ENCODE measurements at regions of chr16 and their contacts with region 1.

Region 1: GRCh38 chr16:19086322-19087199 is 19.1 kb downstream of the COQ7 start:
- DNase-seq: peak; percentile 82 to 87 (median 87)
- ATAC-seq: peak; percentile 99 to 100 (median 99)
- H3K4me3 ChIP-seq: peak overlapping the region; percentile 4 to 38 (median 35)
- H3K27ac ChIP-seq: no peak overlapping the region
- H3K4me1 ChIP-seq: peaks cover 0 to 7% (median 0%) of the 10 kb centered on the region in 4 donors
- H3K27me3 ChIP-seq: no peaks in the 10 kb centered on the region
- CTCF ChIP-seq: peak; percentile 98 to 100 (median 98)
- POLR2A ChIP-seq: no peak

Region 2: DNA sequence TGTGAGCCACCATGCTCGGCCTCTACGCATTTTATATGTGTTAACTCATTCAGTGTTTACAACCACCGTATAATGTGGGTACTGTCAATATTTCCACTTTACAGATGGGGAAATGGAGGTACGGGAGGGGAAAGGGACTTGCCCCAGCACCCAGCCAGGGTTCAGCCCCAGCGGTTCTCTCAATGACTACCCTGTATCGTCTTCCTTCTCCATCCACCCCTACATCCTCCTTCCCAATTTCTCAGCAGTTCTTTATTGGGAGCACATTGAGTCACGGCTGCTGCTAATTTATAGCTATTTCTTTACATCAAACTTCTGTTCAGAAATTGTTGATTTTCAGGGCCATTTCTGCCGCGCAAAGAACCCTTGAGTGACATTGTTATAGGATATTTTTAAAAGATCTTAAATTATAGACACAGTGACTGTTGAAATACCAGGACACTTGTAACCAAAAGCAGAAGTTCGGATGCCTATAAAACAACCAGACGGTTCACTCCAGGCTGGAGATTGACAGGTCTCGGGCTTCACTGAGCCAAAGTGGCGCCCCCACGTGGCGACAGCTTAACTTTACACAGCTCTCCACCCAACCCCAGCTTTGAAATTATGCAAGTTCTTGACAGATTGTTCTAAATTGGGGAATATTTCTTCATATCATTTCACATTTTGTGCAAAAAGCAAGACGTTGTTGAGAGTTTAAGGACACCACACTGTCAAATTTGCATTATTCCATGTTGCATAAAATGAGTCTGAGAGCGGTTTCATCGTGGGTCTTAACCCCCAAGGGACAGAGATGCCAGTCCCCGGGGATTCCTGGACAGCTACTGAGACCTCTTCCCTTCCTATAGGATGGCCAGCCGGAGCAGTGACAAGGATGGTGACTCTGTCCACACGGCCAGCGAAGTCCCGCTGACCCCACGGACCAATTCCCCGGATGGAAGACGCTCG is 93.3 kb after region 1 on chr16:
- intact Hi-C with region 1: loop called in 1 of 2 experiments (anchors 10 kb)
- DNase-seq: no peak
- ATAC-seq: no peak
- H3K4me3 ChIP-seq: no peak overlapping the region
- H3K27ac ChIP-seq: no peak overlapping the region
- H3K4me1 ChIP-seq: peaks cover 0 to 12% (median 0%) of the 10 kb centered on the region in 4 donors
- H3K27me3 ChIP-seq: no peaks in the 10 kb centered on the region
- CTCF ChIP-seq: peak; percentile 43 to 62 (median 52)
- POLR2A ChIP-seq: no peak

Region 3: DNA sequence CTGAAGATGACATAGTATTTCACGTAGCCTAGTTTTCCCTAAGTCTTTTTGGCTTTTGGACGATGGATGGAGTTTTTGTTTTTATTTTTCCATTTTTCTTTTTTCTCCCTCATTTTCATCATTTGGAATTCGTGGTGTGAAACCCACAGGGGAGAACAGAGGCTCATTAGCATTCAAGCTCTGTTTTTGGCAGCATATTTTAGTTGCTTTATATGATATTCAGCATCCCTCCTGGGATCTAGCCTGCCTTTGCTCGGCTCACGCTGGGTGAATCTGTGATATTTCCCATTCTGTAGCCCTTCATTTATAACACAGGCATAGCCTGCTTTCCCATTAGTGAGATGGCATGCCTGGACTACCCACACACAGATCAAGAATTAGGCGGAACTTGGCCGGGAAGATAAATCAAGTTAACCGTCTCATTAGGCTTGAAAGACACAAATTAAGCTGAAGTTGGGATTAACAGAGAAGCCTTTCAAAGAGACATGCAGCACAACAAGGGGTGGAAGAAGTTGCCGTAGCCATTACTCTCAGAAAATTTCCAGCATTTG is 178.9 kb after region 1 on chr16:
- intact Hi-C with region 1: no loop called
- DNase-seq: no peak
- ATAC-seq: no peak
- H3K4me3 ChIP-seq: no peak overlapping the region
- H3K27ac ChIP-seq: no peak overlapping the region
- H3K4me1 ChIP-seq: no peaks in the 10 kb centered on the region
- H3K27me3 ChIP-seq: no peaks in the 10 kb centered on the region
- CTCF ChIP-seq: no peak
- POLR2A ChIP-seq: no peak

Region 4: DNA sequence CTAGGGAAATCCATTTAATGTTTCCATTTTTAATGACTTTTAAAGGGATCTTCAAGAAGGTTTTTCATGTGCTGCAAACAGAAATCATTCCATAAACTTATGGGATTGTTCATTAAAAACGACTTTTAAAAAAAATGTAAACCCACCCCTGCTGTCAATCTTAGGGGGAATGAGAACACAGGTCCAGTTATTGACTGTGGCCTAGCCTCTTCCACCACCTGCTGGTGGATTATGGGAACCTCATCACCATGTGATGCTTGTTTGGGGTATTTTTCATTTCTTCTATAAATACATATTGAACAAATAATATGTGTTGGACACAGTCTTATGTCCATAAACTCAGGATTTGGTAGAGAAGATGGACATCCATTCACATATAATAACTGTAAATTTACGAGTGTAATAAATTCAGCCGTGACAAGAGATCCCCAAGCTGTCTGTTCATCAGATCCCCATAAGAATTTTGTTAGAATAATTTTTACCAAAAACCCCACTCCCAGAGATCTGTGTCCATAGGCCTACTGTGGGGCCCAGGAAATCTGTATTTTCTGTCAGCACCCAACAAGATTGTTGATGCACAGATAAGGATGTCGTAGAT is 289.1 kb after region 1 on chr16:
- intact Hi-C with region 1: loop called (anchors 5 kb)
- DNase-seq: peak in 1 of 3 donors; percentile 50
- ATAC-seq: peak; percentile 75 to 83 (median 80)
- H3K4me3 ChIP-seq: no peak overlapping the region
- H3K27ac ChIP-seq: no peak overlapping the region
- H3K4me1 ChIP-seq: peaks cover 0 to 13% (median 0%) of the 10 kb centered on the region in 4 donors
- H3K27me3 ChIP-seq: no peaks in the 10 kb centered on the region
- CTCF ChIP-seq: peak; percentile 87 to 94 (median 92)
- POLR2A ChIP-seq: no peak

Region 5: GRCh38 chr16:19382887-19383816 is 296.6 kb after region 1 on chr16:
- intact Hi-C with region 1: loop called (anchors 5 kb)
- DNase-seq: no peak
- ATAC-seq: no peak
- H3K4me3 ChIP-seq: no peak overlapping the region
- H3K27ac ChIP-seq: no peak overlapping the region
- H3K4me1 ChIP-seq: peaks cover 0 to 13% (median 3%) of the 10 kb centered on the region in 4 donors
- H3K27me3 ChIP-seq: no peaks in the 10 kb centered on the region
- CTCF ChIP-seq: no peak
- POLR2A ChIP-seq: no peak